Caco-2 (cell line): ENCODE measurements at regions of chr11 and their contacts with region 1.

Region 1: GRCh38 chr11:59753650-59754493 is 1.3 kb upstream of the STX3 start:
- DNase-seq: peak; percentile 86 to 90
- H3K4me3 ChIP-seq: peak overlapping the region; percentile 96
- H3K4me3 Mint-ChIP-seq: peak overlapping the region; percentile 83
- H3K27ac Mint-ChIP-seq: peak overlapping the region; percentile 53
- H3K4me1 ChIP-seq: peaks cover 29% of the 10 kb centered on the region
- H3K4me1 Mint-ChIP-seq: peaks cover 19% of the 10 kb centered on the region
- H3K27me3 ChIP-seq: no peaks in the 10 kb centered on the region
- H3K27me3 Mint-ChIP-seq: no peaks in the 10 kb centered on the region
- CTCF ChIP-seq: peak; percentile 93 to 94

Region 2: DNA sequence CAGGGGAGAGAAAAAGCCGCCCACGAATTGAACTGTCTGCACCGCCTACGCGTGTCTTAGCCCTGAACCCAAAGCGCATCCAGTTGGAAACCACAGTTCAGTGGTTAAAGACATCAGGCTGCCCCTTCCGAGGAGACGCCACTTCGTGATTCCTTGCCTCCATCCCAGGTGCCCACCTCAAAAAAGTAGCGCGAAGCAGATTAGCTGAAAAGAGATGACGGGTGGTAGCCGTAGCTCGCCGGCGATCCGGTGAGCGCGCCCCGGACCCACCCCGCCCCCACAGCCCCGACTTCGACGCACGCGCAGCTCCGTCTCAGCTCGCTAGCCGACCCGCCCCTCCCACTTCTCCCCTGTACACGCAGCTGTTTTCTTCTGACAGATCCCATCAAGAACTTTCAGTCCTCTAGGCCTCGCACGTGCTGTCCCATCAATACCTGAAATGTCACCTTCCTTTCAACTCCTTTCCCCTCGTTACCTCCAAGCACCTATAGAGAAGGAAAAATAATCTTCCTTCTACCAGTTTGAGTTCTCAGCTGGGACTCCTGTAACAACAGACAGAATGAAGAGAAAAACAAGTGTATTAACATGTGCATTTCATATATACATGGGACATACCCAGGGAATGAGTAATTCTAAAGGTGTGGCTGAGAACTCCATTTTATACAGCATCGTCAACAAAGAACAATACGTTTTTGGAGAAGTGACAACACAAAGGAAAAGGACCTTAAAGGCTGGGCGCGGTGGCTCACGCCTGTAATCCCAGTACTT is 193.0 kb before region 1 on chr11:
- CTCF ChIA-PET with region 1: interaction called, 10 read pairs
- POLR2A ChIA-PET with region 1: no interaction called
- intact Hi-C with region 1: no loop called
- DNase-seq: peak; percentile 88 to 92
- H3K4me3 ChIP-seq: peak overlapping the region; percentile 64
- H3K4me3 Mint-ChIP-seq: peak overlapping the region; percentile 75
- H3K27ac Mint-ChIP-seq: peak overlapping the region; percentile 74
- H3K4me1 ChIP-seq: peaks cover 8% of the 10 kb centered on the region; the same call in 1 of the 2 replicates
- H3K4me1 Mint-ChIP-seq: peaks cover 19% of the 10 kb centered on the region
- H3K27me3 ChIP-seq: no peaks in the 10 kb centered on the region
- H3K27me3 Mint-ChIP-seq: no peaks in the 10 kb centered on the region
- CTCF ChIP-seq: no peak

Region 3: DNA sequence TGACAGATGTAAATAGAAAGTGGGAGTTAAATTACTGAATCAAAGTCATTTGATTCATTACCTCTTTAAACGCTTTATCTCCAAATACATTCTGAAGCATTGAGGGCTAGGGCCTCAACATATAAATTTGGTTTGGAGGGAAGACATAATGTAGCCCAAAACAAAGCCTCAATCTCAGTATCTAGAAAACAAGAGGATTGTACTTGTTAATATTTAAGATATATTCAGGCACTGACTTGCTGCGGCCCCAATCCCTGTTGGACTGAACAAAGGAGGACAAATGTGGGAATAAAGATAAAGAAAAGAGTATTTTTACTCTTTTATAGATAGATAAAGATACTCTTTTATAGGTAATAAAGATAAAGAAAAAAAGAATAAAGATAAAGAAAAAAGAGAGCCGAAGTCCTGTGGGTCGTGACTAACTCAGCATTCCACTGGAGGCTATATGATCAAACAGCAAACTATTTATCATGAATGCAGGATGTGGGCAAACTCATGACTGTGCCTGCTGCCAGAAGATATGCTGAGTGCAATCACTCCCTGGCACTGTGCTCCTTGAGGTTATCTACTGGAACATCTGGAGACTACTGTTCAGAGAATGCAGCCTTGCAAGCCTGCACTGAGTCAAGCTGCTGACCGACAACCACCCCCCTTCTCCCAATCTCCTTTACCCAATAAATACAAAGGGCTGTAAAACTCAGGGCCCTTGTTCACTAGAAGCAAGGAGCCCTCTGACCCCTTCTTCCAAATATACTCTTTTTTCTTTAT is 47.2 kb before region 1 on chr11:
- CTCF ChIA-PET with region 1: interaction called, 5 read pairs
- POLR2A ChIA-PET with region 1: interaction called, 6 read pairs
- intact Hi-C with region 1: loop called (anchors 1 kb)
- DNase-seq: peak; percentile 88 to 95
- H3K4me3 ChIP-seq: no peak overlapping the region
- H3K4me3 Mint-ChIP-seq: peak overlapping the region; percentile 34
- H3K27ac Mint-ChIP-seq: peak overlapping the region; percentile 84
- H3K4me1 ChIP-seq: peaks cover 53% of the 10 kb centered on the region
- H3K4me1 Mint-ChIP-seq: peaks cover 30% of the 10 kb centered on the region
- H3K27me3 ChIP-seq: no peaks in the 10 kb centered on the region
- H3K27me3 Mint-ChIP-seq: no peaks in the 10 kb centered on the region
- CTCF ChIP-seq: no peak

Region 4: DNA sequence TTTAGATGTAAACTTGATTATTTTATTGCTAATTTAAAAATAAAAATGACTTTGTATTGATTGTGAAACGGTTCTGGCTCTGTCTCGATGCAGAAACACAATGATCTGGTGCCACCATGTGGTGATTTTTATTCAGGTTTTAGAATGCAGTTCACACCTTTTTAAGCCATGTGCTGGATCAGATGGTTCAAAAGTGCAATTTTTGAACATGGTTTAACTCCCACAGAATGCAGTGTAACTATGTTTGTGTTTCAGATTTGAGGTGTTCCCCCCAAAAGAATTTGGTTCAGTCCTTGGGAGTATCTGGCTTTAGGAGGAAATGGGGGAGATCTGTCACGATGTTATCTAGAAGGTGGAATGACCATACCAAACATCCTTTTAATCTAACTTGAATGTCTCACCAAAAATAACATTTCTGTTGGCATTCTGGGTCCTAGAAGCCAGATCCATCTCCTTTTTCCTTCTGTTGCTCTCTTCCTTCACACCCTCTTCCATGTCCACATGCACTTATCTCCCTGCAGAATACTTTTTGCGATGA is 48.8 kb after region 1 on chr11:
- CTCF ChIA-PET with region 1: interaction called, 8 read pairs
- POLR2A ChIA-PET with region 1: no interaction called
- intact Hi-C with region 1: loop called (anchors 1 kb)
- DNase-seq: peak in 1 of 2 experiments; percentile 68
- H3K4me3 ChIP-seq: no peak overlapping the region
- H3K4me3 Mint-ChIP-seq: no peak overlapping the region
- H3K27ac Mint-ChIP-seq: no peak overlapping the region
- H3K4me1 ChIP-seq: 0 out of 2 replicates have a peak, but pooled peaks cover 9% of the 10 kb centered on the region
- H3K4me1 Mint-ChIP-seq: peaks cover 19% of the 10 kb centered on the region
- H3K27me3 ChIP-seq: no peaks in the 10 kb centered on the region
- H3K27me3 Mint-ChIP-seq: no peaks in the 10 kb centered on the region
- CTCF ChIP-seq: peak; percentile 60 to 68

Region 5: DNA sequence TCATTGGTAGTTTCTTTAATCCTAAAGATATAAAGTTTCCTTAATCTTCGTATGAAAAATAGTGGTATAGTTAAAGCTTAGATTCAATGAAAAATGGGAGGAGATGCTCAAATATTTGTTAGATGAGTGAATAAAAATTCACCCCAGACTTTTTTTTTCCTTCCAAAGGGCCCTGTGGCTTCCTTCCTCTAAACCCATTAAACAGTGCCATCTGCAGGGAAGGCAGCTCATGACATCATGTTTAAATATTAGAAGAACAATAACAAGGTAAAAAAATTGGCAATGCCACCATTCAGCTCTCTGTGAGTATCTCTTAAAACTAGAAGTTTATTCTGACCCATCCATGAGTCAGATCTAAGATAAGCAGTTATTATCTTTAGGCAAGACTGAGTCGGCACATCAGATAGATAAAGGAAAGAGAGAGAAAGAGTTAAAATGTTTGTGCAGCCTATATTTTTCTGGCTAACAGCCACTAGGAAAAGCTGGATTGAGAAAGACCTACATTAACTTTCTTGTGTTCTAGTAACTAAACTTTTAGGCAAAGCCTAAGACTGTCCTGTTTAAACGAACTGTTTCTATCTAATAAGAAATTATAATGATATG is 165.2 kb after region 1 on chr11:
- CTCF ChIA-PET with region 1: no interaction called
- POLR2A ChIA-PET with region 1: no interaction called
- intact Hi-C with region 1: loop called (anchors 5 kb)
- DNase-seq: peak in 1 of 2 experiments; percentile 58
- H3K4me3 ChIP-seq: no peak overlapping the region
- H3K4me3 Mint-ChIP-seq: no peak overlapping the region
- H3K27ac Mint-ChIP-seq: no peak overlapping the region
- H3K4me1 ChIP-seq: no peaks in the 10 kb centered on the region
- H3K4me1 Mint-ChIP-seq: no peaks in the 10 kb centered on the region
- H3K27me3 ChIP-seq: no peaks in the 10 kb centered on the region
- H3K27me3 Mint-ChIP-seq: no peaks in the 10 kb centered on the region
- CTCF ChIP-seq: peak; percentile 50 to 57